GM13976 (cell line): ENCODE measurements at regions of chr16 and their contacts with region 1.

Region 1: DNA sequence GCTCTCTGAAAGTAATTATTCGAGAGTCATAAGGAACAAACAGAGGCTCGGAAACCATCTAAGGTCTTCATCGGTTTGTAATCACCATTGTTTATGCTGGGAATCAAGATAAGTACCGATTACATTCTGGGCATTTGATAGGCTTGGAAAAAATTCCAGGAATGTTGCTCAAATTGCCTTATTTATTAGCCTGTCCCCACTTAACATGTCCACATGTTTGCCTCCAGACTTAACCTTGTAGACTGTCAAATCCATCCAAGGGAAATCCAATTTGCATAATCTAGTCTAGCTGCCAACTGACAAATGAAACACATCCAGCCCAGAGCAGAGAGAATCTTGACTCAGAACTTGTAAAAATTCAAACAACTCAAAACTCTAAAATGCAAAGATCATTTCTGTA is 51.3 kb upstream of the TMC5 start:
- DNase-seq: no peak
- CTCF ChIP-seq: no peak

Region 2: GRCh38 chr16:18801197-18801972 is 565.0 kb before region 1 on chr16 and contains the start of gene ARL6IP1:
- in situ Hi-C with region 1: no loop called
- DNase-seq: peak; percentile 99
- CTCF ChIP-seq: peak; percentile 88

Region 3: DNA sequence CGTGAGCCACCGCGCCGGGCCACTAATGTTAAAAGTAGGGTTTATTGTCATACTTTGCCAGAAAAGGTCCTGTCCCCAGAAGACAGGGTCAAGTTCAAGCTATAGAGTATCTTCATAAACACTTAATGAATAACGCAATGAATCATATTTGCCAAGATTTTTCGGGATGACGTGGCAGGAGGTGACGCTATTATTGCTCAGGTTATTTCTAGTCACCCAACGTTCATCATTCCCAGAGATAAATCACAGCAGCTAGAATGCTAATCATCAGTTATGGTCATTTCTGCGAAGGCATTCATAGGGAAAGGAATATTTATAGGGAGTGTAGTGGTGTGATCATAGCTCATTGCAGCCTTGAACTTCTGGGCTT is 53.3 kb after region 1 on chr16:
- in situ Hi-C with region 1: loop called (anchors 10 kb)
- DNase-seq: no peak
- CTCF ChIP-seq: no peak